ENCODE measurements at regions of chr14 and their contacts with region 1.

Region 1: DNA sequence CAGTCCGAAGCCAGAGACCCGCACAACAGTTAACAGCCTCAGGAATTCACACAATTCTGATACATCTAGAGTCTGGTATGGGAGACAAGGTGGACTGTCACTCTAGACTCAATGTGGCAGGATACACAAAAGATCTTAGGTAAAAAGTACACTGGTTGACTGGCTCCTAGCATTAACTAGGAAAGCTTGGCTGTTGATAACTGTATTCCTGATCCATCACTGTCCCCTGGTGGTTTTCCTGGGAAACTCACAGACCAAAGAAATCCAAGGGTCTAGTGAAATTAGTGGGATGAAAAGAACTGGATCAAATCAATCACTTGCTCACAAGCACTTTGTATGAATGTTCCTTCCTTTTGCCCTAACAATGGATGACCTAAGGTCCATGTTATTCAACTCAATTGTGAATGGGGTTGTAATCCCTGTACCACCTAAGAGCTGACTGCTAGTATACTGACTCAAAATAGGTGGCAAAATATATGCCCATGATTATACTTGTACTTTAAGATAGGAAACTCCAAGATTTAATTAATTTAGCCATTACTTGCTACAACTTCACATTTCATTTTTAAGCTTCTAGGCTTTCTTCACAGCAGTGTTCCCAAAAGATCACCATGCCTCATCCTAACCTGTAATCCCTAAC is 14.0 kb downstream of the NPC2 start:
- DNase-seq: no peak
- H3K4me3 ChIP-seq: no peak overlapping the region
- H3K27ac ChIP-seq: no peak overlapping the region
- H3K4me1 ChIP-seq: no peaks in the 10 kb centered on the region
- H3K27me3 ChIP-seq: no peaks in the 10 kb centered on the region
- CTCF ChIP-seq: peak; percentile 37 to 52 (median 38)
- EP300 ChIP-seq: no peak
- POLR2A ChIP-seq: no peak

Region 2: DNA sequence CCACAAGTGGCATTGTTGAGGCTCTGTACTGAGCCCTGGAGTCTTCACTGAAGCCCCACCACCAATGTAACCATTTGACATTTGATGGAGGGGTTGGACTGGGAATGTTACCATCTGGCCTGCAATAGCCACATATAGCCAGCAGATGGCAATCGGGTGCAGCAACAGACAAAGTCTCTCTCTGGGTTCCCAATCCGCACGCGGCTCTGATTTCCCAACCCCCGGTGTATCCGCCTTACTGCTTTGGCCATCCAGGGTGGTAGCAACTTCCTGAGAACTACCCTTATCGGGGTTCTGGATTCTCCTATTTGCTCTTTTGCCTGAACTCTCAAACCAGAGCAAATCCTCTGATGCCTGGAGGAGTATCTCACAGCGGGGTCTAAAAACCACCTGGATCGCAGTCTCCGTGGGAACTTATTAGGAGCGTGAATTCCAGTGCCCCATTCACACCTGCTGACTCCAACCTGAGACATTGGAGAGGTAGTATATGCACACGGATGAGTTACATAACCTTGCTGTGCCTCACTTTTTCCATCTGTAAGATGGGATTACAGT is 116.7 kb before region 1 on chr14:
- intact Hi-C with region 1: loop called (anchors 5 kb)
- DNase-seq: no peak
- H3K4me3 ChIP-seq: no peak overlapping the region
- H3K27ac ChIP-seq: no peak overlapping the region
- H3K4me1 ChIP-seq: peaks cover 0 to 6% (median 2%) of the 10 kb centered on the region in 4 donors
- H3K27me3 ChIP-seq: peaks cover 0 to 46% (median 0%) of the 10 kb centered on the region in 4 donors
- CTCF ChIP-seq: peak; percentile 92 to 99 (median 92)
- EP300 ChIP-seq: no peak
- POLR2A ChIP-seq: no peak

Region 3: GRCh38 chr14:74583689-74584434 is 104.7 kb after region 1 on chr14:
- intact Hi-C with region 1: no loop called
- DNase-seq: no peak
- H3K4me3 ChIP-seq: no peak overlapping the region
- H3K27ac ChIP-seq: peak overlapping the region in 1 of 4 donors; percentile 48
- H3K4me1 ChIP-seq: peaks cover 21 to 52% (median 47%) of the 10 kb centered on the region in 4 donors
- H3K27me3 ChIP-seq: no peaks in the 10 kb centered on the region
- CTCF ChIP-seq: no peak
- EP300 ChIP-seq: no peak
- POLR2A ChIP-seq: no peak

Measured in esophagus muscularis mucosa (tissue), 4 donors.